Posterior vena cava (tissue), 2 donors: ENCODE measurements at regions of chr19 and their contacts with region 1.

Region 1: GRCh38 chr19:12777217-12778016 is 2.1 kb upstream of the HOOK2 start:
- DNase-seq: peak; percentile 95

Region 2: DNA sequence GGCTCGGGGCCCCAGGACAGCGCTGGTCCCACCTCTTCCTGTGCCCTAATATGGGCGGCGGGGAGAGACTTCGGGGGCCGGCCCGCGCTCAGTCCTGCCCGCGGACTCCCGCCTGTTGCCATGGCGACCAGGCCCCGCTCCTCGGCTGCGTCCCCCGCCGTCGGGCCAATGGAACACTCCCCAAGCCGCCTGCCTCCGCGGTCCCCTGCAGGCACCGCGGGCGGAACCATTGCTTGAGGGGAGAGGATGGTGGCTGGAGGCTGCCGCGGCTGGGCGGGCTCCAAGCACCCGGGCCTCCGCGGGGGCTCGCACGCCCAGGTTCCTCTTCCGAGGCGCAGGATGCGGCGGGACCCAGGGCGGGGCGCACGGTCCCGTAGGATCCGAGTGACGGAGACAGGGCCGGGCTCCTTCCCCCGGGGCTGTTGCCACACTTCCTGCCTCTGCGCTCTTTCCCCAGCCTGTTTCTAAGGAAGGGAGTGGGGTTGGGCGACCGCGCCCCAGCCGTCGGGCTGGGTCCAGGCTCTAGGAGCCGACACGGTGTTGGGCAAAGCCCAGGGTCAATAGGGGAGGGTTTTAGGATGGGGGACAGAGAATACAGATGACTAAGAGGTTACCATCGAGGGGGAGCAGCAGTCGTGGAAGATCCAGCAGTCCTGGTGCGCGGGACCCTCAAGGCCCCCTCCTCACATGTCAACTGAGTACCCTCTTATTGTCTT is 12.6 kb after region 1 on chr19:
- intact Hi-C with region 1: loop called in 1 of 2 experiments (anchors 2 kb)
- DNase-seq: peak; percentile 100

Region 3: GRCh38 chr19:12796146-12797071 is 19.0 kb after region 1 on chr19:
- intact Hi-C with region 1: loop called (anchors 2 kb)
- DNase-seq: peak; percentile 93